ENCODE measurements at regions of chr9 and their contacts with region 1.

Region 1: GRCh38 chr9:21281275-21281674 is 23.8 kb downstream of the IFNA5 start:
- DNase-seq: no peak
- H3K4me3 ChIP-seq: no peak overlapping the region
- H3K27ac ChIP-seq: no peak overlapping the region
- H3K4me1 ChIP-seq: no peaks in the 10 kb centered on the region
- H3K27me3 ChIP-seq: peaks cover 7 to 19% of the 10 kb centered on the region in 2 experiments
- CTCF ChIP-seq: no peak
- POLR2A ChIP-seq: no peak

Region 2: DNA sequence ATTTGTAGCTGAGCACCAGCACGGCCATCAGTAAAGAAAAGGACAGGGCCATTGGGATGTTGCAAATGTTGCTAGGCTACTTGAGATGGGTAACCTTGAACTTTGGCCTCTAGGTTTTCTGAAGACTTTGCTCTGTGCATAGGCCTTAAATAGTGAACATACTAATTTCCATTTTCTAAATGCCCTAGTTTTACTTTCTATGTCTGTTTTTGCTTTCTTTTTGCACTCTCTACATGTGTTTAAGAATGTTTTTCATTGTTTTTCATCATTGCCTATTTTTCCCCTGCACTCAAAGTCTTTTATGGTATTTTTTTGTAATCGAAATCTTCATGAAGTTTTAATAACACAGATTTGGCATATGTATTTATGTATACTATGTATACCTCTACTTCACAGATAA is 53.2 kb before region 1 on chr9 and contains the start of gene IFNA17:
- CTCF ChIA-PET with region 1: no interaction called
- POLR2A ChIA-PET with region 1: no interaction called
- dilution Hi-C with region 1: no loop called
- intact Hi-C with region 1: no loop called
- DNase-seq: no peak
- H3K4me3 ChIP-seq: no peak within 1 kb of the TSS
- H3K27ac ChIP-seq: no peak within 1 kb of the TSS
- H3K4me1 ChIP-seq: no peaks in the 10 kb centered on the region
- H3K27me3 ChIP-seq: peaks cover 0 to 3% of the 10 kb centered on the region in 2 experiments
- CTCF ChIP-seq: no peak
- POLR2A ChIP-seq: no peak
- total RNA-seq, gene IFNA17: not detected in 2 replicates

Region 3: DNA sequence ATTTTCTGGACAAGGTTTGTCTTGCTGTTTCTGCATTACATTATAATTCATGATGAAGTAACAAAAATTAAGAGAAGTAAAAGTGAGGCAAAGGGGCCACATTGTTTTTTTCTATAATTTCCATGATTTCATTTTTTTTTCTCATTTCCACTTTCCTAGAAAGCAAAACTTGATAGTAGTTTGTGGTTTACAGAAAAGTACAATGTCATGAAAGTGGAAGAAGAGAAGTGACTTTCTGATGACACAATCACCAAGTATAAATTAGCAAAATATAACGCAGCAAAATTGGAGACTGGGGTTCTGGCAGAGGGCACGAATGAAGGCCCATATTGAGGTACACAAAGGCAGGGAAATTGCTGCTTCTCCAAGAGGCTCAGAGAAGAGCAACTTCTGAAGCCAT is 36.4 kb before region 1 on chr9:
- CTCF ChIA-PET with region 1: no interaction called
- POLR2A ChIA-PET with region 1: no interaction called
- dilution Hi-C with region 1: no loop called
- intact Hi-C with region 1: no loop called
- DNase-seq: no peak
- H3K4me3 ChIP-seq: no peak overlapping the region
- H3K27ac ChIP-seq: no peak overlapping the region
- H3K4me1 ChIP-seq: no peaks in the 10 kb centered on the region
- H3K27me3 ChIP-seq: peaks cover 5 to 20% of the 10 kb centered on the region in 2 experiments
- CTCF ChIP-seq: no peak
- POLR2A ChIP-seq: no peak

Region 4: DNA sequence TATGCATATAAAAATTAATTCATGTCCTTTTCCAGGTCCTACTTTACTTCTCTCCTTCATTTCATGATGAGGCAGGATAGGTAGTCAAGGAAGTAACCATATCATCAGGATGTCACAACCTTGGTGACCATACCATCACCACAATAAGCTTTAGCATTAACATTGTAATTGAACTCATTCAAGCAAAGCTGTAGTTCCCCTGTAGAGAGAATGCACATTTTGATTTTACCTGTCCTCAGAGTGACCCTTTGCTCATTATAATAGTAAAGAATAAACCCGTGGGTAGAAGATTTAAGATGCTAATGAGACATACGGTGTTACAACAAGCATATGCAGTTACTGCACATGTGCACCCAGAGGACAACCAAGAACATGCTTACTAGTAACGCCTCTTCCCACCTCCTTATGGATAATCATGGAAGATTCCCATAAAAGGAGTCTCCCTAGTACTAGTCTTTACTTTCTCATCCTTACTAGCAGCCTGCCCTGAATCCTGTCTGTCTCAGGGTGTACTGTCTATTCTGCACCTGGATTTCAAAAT is 67.2 kb after region 1 on chr9:
- CTCF ChIA-PET with region 1: no interaction called
- POLR2A ChIA-PET with region 1: no interaction called
- dilution Hi-C with region 1: no loop called
- intact Hi-C with region 1: loop called (anchors 5 kb)
- DNase-seq: no peak
- H3K4me3 ChIP-seq: no peak overlapping the region
- H3K27ac ChIP-seq: no peak overlapping the region
- H3K4me1 ChIP-seq: no peaks in the 10 kb centered on the region
- H3K27me3 ChIP-seq: peaks cover 10 to 35% of the 10 kb centered on the region in 2 experiments
- CTCF ChIP-seq: no peak
- POLR2A ChIP-seq: no peak

Measured in endothelial cell of umbilical vein (primary cell).